Testis (tissue), 5 donors: ENCODE measurements at regions of chr9 and their contacts with region 1.

Region 1: DNA sequence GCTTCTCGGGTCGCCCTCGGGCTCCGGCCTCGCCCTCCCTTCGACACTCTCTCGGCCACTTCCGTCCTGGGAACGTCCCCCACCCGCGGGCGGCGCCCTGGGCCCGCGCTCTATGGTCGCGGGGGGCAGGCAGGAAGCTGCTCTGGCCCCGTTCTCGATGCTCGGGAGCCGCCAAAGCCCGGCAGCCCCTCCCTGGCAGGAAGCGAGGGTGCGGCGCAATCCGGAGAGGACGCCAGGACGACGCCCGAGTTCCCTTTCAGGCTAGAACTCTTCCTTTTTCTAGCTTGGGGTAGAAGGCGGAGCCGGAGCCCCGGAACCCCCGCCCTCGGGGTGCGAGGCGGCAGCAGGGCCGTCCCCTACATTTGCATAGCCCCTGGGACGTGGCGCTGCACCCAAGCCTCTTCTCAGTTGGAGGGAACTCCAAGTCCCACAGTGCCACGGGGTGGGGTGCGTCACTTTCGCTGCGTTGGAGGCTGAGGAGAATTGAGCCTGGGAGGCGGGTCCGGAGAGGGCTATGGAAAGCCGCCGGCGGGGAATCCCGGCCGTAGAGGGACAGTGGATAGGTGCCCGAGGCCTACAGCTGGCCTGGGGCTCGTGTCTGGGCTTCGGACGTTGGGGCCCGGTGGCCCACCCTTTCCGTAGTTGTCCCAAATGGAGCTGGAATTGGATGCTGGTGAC is at the starts of genes CREB3 and TLN1:
- DNase-seq: peak; percentile 98
- H3K4me3 ChIP-seq: peak within 1 kb of the TSS; percentile 70 to 95
- H3K27ac ChIP-seq: peak within 1 kb of the TSS; percentile 71 to 97
- H3K4me1 ChIP-seq: peaks cover 52% of the 10 kb centered on the region
- H3K27me3 ChIP-seq: no peaks in the 10 kb centered on the region
- CTCF ChIP-seq: peak in 1 of 3 experiments; percentile 13
- POLR2A ChIP-seq: peak; percentile 61
- total RNA-seq, gene CREB3: 51.2 to 63.1 TPM
- total RNA-seq, gene TLN1: 134 to 201 TPM

Region 2: GRCh38 chr9:35436933-35437332 is 295.3 kb before region 1 on chr9:
- intact Hi-C with region 1: no loop called
- DNase-seq: no peak
- H3K4me3 ChIP-seq: no peak overlapping the region
- H3K27ac ChIP-seq: no peak overlapping the region
- H3K4me1 ChIP-seq: no peaks in the 10 kb centered on the region
- H3K27me3 ChIP-seq: no peaks in the 10 kb centered on the region
- CTCF ChIP-seq: no peak
- POLR2A ChIP-seq: no peak

Region 3: GRCh38 chr9:35664531-35665470 is 67.5 kb before region 1 on chr9 and contains the start of gene ARHGEF39:
- intact Hi-C with region 1: loop called (anchors 10 kb)
- DNase-seq: peak; percentile 84
- H3K4me3 ChIP-seq: peak within 1 kb of the TSS; percentile 53 to 63
- H3K27ac ChIP-seq: peak within 1 kb of the TSS; percentile 22 to 37
- H3K4me1 ChIP-seq: peaks cover 14% of the 10 kb centered on the region
- H3K27me3 ChIP-seq: no peaks in the 10 kb centered on the region
- CTCF ChIP-seq: no peak
- POLR2A ChIP-seq: no peak
- total RNA-seq, gene ARHGEF39: 2.2 to 6.5 TPM

Region 4: GRCh38 chr9:35814841-35815543 is 82.7 kb after region 1 on chr9 and contains the start of gene HINT2:
- intact Hi-C with region 1: loop called (anchors 10 kb)
- DNase-seq: peak; percentile 99
- H3K4me3 ChIP-seq: peak within 1 kb of the TSS; percentile 83 to 90
- H3K27ac ChIP-seq: peak within 1 kb of the TSS; percentile 90 to 98
- H3K4me1 ChIP-seq: peaks cover 26% of the 10 kb centered on the region
- H3K27me3 ChIP-seq: no peaks in the 10 kb centered on the region
- CTCF ChIP-seq: peak in 1 of 3 experiments; percentile 1
- POLR2A ChIP-seq: peak; percentile 54
- total RNA-seq, gene HINT2: 36.1 to 36.9 TPM

Region 5: GRCh38 chr9:36337865-36338264 is 605.6 kb after region 1 on chr9:
- intact Hi-C with region 1: no loop called
- DNase-seq: no peak
- H3K4me3 ChIP-seq: no peak overlapping the region
- H3K27ac ChIP-seq: no peak overlapping the region
- H3K4me1 ChIP-seq: no peaks in the 10 kb centered on the region
- H3K27me3 ChIP-seq: no peaks in the 10 kb centered on the region
- CTCF ChIP-seq: no peak
- POLR2A ChIP-seq: no peak